WTC11 (cell line): ENCODE measurements at regions of chr7 and their contacts with region 1.

Region 1: DNA sequence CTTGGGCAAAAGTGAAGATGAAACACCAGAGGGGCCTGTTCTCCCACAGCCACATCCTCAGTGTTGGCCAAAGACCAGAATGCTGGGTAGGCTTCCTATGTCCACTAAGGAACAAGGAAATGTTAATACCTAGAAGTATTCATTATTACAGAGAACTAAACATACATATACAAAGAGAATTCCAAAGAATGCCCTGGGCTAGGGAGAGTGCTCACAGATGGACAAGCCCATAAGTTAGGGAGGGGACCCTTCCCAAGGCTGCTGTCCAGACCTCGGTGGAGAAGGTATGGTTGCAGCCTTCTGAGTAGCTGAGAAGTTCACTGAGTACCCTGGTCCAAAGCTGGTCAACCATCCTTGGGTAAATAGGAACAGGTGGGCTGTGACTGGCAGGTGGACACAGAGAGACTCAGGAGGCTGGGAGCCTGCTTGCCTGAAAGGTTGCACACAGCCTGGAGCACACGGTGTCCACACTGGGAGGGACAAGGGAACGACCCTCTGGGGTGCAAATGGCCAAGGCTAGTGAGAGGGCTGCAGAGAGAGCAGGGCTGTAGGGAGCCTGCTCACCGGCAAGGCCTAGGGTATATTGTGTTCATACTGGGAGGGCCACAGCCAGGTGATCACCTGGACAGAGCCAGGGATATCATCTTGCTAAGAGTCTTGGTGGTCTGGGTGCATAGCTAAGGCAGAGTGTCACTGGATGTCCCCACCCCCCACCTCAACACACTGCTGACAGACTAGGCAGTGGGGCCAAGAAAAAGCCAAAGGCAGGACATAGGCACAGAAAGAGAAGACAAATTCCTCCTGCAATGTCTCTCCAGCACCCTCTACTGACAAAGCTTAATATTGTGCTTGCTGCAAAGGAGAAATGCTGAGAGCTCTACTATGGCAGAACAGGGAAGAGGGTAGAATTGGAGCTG is 40.3 kb downstream of the CPVL start:
- DNase-seq: peak; percentile 34
- ATAC-seq: peak; percentile 86
- H3K4me3 Mint-ChIP-seq: no peak overlapping the region
- H3K27ac Mint-ChIP-seq: no peak overlapping the region
- H3K4me1 Mint-ChIP-seq: no peaks in the 10 kb centered on the region; the same call in 1 of the 2 replicates
- H3K27me3 Mint-ChIP-seq: no peaks in the 10 kb centered on the region
- CTCF ChIP-seq: peak; percentile 47

Region 2: GRCh38 chr7:29084832-29085231 is 21.2 kb before region 1 on chr7:
- CTCF ChIA-PET with region 1: no interaction called
- POLR2A ChIA-PET with region 1: interaction called, 10 read pairs
- DNase-seq: no peak
- ATAC-seq: no peak
- H3K4me3 Mint-ChIP-seq: no peak overlapping the region
- H3K27ac Mint-ChIP-seq: no peak overlapping the region
- H3K4me1 Mint-ChIP-seq: peaks cover 11% of the 10 kb centered on the region
- H3K27me3 Mint-ChIP-seq: no peaks in the 10 kb centered on the region
- CTCF ChIP-seq: no peak

Region 3: GRCh38 chr7:29091715-29092114 is 14.3 kb before region 1 on chr7:
- CTCF ChIA-PET with region 1: interaction called, 10 read pairs
- POLR2A ChIA-PET with region 1: no interaction called
- DNase-seq: no peak
- ATAC-seq: 0 out of 2 replicates have a peak, but pooled peaks have one; percentile 46
- H3K4me3 Mint-ChIP-seq: no peak overlapping the region
- H3K27ac Mint-ChIP-seq: no peak overlapping the region
- H3K4me1 Mint-ChIP-seq: peaks cover 23% of the 10 kb centered on the region
- H3K27me3 Mint-ChIP-seq: no peaks in the 10 kb centered on the region; the same call in 1 of the 2 replicates
- CTCF ChIP-seq: no peak

Region 4: DNA sequence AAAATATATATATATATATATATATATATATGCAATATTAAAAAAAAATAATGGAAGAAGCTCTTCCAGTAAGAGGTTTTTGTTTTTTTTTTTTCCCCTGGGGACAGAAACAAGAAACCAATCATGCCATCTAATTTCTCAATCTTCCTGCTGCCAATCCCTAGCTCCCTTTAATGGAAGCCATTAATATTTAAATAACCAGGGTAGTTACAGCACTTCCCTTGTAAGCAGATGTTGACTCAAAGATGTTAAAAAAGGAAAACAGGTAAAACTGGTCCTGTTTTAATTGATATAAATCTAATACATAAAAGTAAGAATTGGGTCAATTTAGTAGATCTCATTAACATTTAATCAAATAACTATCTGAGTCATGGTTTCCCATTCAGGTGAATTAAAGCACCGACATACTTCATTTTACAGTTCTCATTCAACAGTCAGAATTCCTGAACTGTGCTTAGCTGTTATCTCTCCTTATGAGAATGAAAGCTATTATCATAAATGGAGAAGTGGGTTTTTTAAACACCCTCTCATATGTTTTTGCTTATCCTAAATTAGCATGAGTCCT is 17.7 kb after region 1 on chr7:
- CTCF ChIA-PET with region 1: interaction called, 18 read pairs
- POLR2A ChIA-PET with region 1: no interaction called
- DNase-seq: no peak
- ATAC-seq: no peak
- H3K4me3 Mint-ChIP-seq: no peak overlapping the region
- H3K27ac Mint-ChIP-seq: no peak overlapping the region
- H3K4me1 Mint-ChIP-seq: peaks cover 43% of the 10 kb centered on the region
- H3K27me3 Mint-ChIP-seq: no peaks in the 10 kb centered on the region; the same call in 1 of the 2 replicates
- CTCF ChIP-seq: no peak

Region 5: DNA sequence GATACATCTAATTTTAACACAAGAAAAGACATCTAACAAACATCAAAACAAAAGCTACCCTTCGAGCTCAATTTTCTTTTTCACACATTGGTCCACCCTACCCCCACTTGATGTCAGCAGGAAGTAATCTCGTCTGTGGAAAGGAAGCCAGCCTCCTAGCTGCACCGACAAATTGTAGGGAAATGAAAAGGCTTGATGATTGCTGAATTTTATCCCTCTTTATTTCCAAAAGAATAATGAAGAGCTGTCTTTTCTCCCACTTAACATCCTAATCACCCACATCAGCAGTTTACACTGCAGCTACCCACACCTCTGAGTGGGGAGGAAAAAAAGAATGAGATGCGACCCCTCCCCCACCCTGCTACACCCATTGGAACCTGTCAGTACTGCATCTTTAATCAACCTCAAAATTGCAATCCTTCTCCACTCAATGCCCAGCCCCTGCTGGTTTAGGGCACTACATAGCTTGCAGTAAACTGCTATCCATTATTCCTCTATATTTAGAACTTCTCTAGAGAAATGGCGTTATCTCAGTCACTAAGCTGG is 51.0 kb after region 1 on chr7:
- CTCF ChIA-PET with region 1: interaction called, 11 read pairs
- POLR2A ChIA-PET with region 1: no interaction called
- DNase-seq: no peak
- ATAC-seq: peak; percentile 67; the same call in 1 of the 2 replicates
- H3K4me3 Mint-ChIP-seq: no peak overlapping the region
- H3K27ac Mint-ChIP-seq: no peak overlapping the region
- H3K4me1 Mint-ChIP-seq: peaks cover 13% of the 10 kb centered on the region
- H3K27me3 Mint-ChIP-seq: no peaks in the 10 kb centered on the region
- CTCF ChIP-seq: no peak

Region 6: GRCh38 chr7:29408841-29409243 is 302.8 kb after region 1 on chr7:
- CTCF ChIA-PET with region 1: interaction called, 33 read pairs
- POLR2A ChIA-PET with region 1: no interaction called
- DNase-seq: peak; percentile 34
- ATAC-seq: peak; percentile 60
- H3K4me3 Mint-ChIP-seq: peak overlapping the region; percentile 33; the same call in 1 of the 2 replicates
- H3K27ac Mint-ChIP-seq: no peak overlapping the region
- H3K4me1 Mint-ChIP-seq: peaks cover 19% of the 10 kb centered on the region
- H3K27me3 Mint-ChIP-seq: no peaks in the 10 kb centered on the region
- CTCF ChIP-seq: peak; percentile 84